Breast epithelium (tissue), 4 donors: ENCODE measurements at regions of chr14 and their contacts with region 1.

Region 1: GRCh38 chr14:101827286-101827685 is 65.8 kb downstream of the PPP2R5C start:
- DNase-seq: no peak
- H3K4me3 ChIP-seq: no peak overlapping the region
- H3K27ac ChIP-seq: no peak overlapping the region
- H3K4me1 ChIP-seq: no peaks in the 10 kb centered on the region
- H3K27me3 ChIP-seq: no peaks in the 10 kb centered on the region
- CTCF ChIP-seq: no peak
- POLR2A ChIP-seq: no peak

Region 2: DNA sequence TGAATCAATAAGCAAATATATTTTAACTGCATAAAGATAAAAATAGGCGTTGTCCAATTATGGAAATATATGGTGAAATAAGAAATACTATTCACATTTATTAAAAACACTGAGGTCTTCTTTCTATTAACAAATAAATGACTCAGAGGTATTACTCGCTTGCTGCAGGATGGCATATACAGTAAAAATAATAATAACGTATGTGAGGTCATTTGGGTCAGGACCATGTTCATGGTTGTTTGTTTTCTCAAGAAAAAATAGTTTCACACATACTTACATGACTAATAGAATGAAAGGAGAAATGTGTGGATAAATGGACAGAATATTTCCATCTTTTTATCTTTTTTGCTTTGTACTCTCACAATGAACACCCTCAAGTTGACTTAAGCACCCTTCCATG is 877.3 kb before region 1 on chr14:
- intact Hi-C with region 1: no loop called
- DNase-seq: no peak
- H3K4me3 ChIP-seq: no peak overlapping the region
- H3K27ac ChIP-seq: no peak overlapping the region
- H3K4me1 ChIP-seq: no peaks in the 10 kb centered on the region
- H3K27me3 ChIP-seq: no peaks in the 10 kb centered on the region
- CTCF ChIP-seq: no peak
- POLR2A ChIP-seq: no peak

Region 3: DNA sequence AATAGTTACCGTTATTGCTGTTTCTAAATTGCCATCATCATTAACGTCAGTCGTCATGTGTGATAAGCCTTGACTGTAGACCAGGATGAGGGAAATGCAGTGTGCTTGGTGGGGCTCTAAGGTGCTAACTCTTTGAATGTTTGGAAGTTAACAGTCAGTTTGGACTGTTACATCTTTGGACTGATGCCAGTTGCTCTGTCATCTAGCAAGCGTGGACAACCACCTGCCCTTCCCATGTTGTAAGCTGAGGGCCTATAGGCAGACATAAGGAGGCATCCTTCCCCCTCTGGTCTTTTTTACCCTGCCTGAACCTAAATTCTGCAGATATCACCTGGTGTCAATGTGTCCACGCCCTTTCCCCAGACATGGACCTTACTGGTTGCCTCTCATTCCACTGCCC is 28.7 kb after region 1 on chr14:
- intact Hi-C with region 1: loop called (anchors 1 kb)
- DNase-seq: no peak
- H3K4me3 ChIP-seq: no peak overlapping the region
- H3K27ac ChIP-seq: no peak overlapping the region
- H3K4me1 ChIP-seq: no peaks in the 10 kb centered on the region
- H3K27me3 ChIP-seq: no peaks in the 10 kb centered on the region
- CTCF ChIP-seq: no peak
- POLR2A ChIP-seq: no peak

Region 4: DNA sequence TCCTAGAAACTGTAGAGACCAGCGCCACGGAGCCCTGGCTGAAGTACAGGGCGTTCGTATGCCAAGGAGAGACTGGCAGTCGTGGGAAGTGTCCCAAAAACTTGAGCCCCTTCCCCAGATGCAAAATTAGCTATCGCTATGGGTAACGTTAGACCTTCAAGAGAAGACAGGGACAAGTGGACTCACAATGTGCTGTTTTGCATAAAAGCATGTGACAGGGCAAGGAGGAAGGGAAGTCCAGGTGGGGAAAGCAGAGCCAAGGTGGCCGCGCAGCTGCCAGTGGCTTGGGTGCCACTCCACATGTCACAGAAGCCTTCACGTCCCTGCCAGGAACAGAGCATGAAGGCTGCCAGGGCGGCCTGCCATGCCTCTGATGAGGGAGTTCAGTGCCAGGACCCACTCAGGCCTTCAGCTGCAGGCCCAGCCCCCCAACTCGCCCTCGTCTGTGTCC is 75.8 kb after region 1 on chr14:
- intact Hi-C with region 1: no loop called
- DNase-seq: no peak
- H3K4me3 ChIP-seq: no peak overlapping the region
- H3K27ac ChIP-seq: no peak overlapping the region
- H3K4me1 ChIP-seq: no peaks in the 10 kb centered on the region
- H3K27me3 ChIP-seq: no peaks in the 10 kb centered on the region
- CTCF ChIP-seq: no peak
- POLR2A ChIP-seq: no peak